Calu3 (cell line): ENCODE measurements at regions of chr5 and their contacts with region 1.

Region 1: GRCh38 chr5:170623576-170624181 is 119.9 kb downstream of the KCNIP1 start:
- DNase-seq: peak; percentile 86
- H3K4me3 Mint-ChIP-seq: no peak overlapping the region
- H3K27ac Mint-ChIP-seq: no peak overlapping the region
- H3K4me1 Mint-ChIP-seq: no peaks in the 10 kb centered on the region
- H3K27me3 Mint-ChIP-seq: peaks cover 54% of the 10 kb centered on the region
- CTCF ChIP-seq: peak; percentile 94

Region 2: GRCh38 chr5:170225326-170226128 is 398.2 kb before region 1 on chr5:
- CTCF ChIA-PET with region 1: interaction called, 3 read pairs
- intact Hi-C with region 1: loop called (anchors 5 kb)
- DNase-seq: peak; percentile 83
- H3K4me3 Mint-ChIP-seq: no peak overlapping the region
- H3K27ac Mint-ChIP-seq: no peak overlapping the region
- H3K4me1 Mint-ChIP-seq: no peaks in the 10 kb centered on the region
- H3K27me3 Mint-ChIP-seq: peaks cover 17% of the 10 kb centered on the region
- CTCF ChIP-seq: peak; percentile 86

Region 3: GRCh38 chr5:170434966-170435605 is 188.6 kb before region 1 on chr5:
- CTCF ChIA-PET with region 1: interaction called, 8 read pairs
- intact Hi-C with region 1: loop called (anchors 1 kb)
- DNase-seq: peak; percentile 79
- H3K4me3 Mint-ChIP-seq: no peak overlapping the region
- H3K27ac Mint-ChIP-seq: no peak overlapping the region
- H3K4me1 Mint-ChIP-seq: peaks cover 5% of the 10 kb centered on the region
- H3K27me3 Mint-ChIP-seq: peaks cover 44% of the 10 kb centered on the region
- CTCF ChIP-seq: peak; percentile 99

Region 4: DNA sequence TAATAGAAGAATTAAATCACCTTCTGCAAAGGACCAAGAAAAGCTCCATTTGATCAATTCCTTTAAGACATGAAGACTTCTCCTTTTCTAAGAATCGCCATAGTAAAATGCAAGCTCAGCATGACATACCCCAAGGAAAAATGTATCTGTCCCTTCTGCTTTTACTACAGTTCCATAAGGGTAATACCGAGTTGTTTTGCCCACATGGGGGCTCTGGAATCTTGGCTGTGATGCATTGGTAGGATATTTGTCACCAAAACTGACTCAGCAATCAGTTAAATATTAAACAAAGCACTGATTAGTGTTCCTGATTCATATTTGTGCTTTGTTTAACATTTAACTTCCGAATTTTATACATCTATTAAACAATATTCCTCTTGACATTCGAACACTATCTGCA is 144.2 kb before region 1 on chr5:
- CTCF ChIA-PET with region 1: interaction called, 5 read pairs
- intact Hi-C with region 1: loop called (anchors 1 kb)
- DNase-seq: peak; percentile 71
- H3K4me3 Mint-ChIP-seq: no peak overlapping the region
- H3K27ac Mint-ChIP-seq: peak overlapping the region; percentile 56
- H3K4me1 Mint-ChIP-seq: peaks cover 44% of the 10 kb centered on the region
- H3K27me3 Mint-ChIP-seq: no peaks in the 10 kb centered on the region
- CTCF ChIP-seq: no peak

Region 5: DNA sequence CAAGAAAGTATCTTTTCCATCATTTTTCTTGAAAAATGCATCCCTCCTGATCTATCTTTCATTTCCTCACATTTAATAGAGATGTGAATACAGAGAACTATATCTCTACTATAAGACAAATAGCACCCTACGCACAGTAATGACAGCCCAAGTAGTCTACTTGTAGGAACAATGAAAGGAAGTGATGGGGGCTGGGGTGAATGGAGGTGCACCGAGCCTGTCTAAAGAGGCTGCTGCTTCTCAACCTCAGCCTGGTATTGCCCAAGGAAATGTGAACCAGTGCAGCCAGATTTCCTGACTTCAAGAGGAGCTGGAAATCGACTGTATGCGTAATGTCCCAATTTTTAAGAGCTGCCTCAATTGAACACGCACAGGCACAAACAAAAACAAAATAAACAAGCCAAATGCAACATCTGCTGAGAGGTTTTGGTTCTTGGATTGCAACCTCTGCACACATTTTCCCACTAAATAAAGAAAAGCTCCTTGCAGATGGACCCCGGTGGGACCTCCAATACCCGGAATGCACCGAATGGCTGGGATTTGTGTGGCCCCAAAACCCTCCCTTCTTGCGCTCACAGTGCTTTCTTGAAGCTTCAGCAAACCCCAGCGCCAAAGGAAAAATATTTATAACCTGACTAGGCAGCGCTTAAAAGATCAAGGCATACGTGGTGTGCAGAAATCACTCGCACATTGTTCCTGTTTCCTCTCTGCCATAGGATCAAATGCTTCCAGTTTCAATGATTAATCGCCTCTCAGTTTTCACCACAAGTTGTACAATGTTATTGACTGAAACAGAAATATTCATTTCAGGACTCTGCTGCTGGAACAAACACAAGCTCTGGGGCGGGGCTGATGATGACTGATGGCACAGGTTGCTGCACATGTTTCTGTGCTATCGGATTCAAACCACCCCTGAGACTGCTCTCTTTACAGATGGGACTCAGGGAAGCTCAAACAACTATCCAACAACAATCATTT is 51.5 kb before region 1 on chr5:
- CTCF ChIA-PET with region 1: no interaction called
- intact Hi-C with region 1: loop called (anchors 1 kb)
- DNase-seq: peak; percentile 62
- H3K4me3 Mint-ChIP-seq: peak overlapping the region; percentile 62
- H3K27ac Mint-ChIP-seq: peak overlapping the region; percentile 23
- H3K4me1 Mint-ChIP-seq: peaks cover 31% of the 10 kb centered on the region
- H3K27me3 Mint-ChIP-seq: peaks cover 60% of the 10 kb centered on the region
- CTCF ChIP-seq: no peak